ENCODE measurements at regions of chr15 and their contacts with region 1.

Region 1: GRCh38 chr15:43285609-43286037 is 18.9 kb upstream of the TGM5 start:
- DNase-seq: peak; percentile 83
- ATAC-seq: peak; percentile 85
- H3K4me3 ChIP-seq: peak overlapping the region in 1 of 5 experiments; percentile 16
- H3K4me3 Mint-ChIP-seq: no peak overlapping the region
- H3K27ac ChIP-seq: no peak overlapping the region
- H3K27ac Mint-ChIP-seq: no peak overlapping the region
- H3K4me1 ChIP-seq: peaks cover 11 to 12% of the 10 kb centered on the region in 2 donors
- H3K4me1 Mint-ChIP-seq: peaks cover 14% of the 10 kb centered on the region
- H3K27me3 ChIP-seq: peaks cover 0 to 10% (median 0%) of the 10 kb centered on the region in 4 experiments
- H3K27me3 Mint-ChIP-seq: peaks cover 6% of the 10 kb centered on the region
- CTCF ChIP-seq: peak; percentile 84

Region 2: DNA sequence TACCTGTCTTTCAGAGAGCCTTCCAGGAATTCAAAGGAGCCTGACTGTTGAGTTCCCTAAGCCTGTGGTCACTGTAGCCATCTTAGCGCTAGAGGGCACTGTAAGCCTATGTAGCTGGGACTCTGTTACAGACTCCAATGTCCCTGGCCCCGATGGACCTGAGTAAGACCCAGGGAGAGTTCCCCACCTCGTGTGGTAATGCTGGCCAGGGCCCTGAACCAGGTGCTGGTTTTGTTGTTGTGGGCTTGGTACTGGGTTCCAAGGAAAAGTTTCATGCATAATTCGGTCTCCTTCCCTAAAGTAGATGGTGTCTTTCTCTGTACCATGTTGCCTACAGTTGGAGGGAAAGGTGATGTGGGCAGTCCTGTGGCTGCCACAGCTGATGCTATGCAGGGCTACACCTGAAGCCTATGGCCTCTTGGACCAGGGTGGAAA is 581.1 kb before region 1 on chr15:
- CTCF ChIA-PET with region 1: interaction called, 3 read pairs
- POLR2A ChIA-PET with region 1: no interaction called
- intact Hi-C with region 1: loop called (anchors 10 kb)
- DNase-seq: peak; percentile 73
- ATAC-seq: peak; percentile 89
- H3K4me3 ChIP-seq: no peak overlapping the region
- H3K4me3 Mint-ChIP-seq: no peak overlapping the region
- H3K27ac ChIP-seq: no peak overlapping the region
- H3K27ac Mint-ChIP-seq: no peak overlapping the region
- H3K4me1 ChIP-seq: no peaks in the 10 kb centered on the region
- H3K4me1 Mint-ChIP-seq: no peaks in the 10 kb centered on the region
- H3K27me3 ChIP-seq: no peaks in the 10 kb centered on the region
- H3K27me3 Mint-ChIP-seq: no peaks in the 10 kb centered on the region
- CTCF ChIP-seq: peak; percentile 78

Region 3: GRCh38 chr15:43185157-43186017 is 100.2 kb before region 1 on chr15 and contains the start of gene CCNDBP1:
- CTCF ChIA-PET with region 1: interaction called, 8 read pairs
- POLR2A ChIA-PET with region 1: interaction called, 5 read pairs
- intact Hi-C with region 1: loop called (anchors 1 kb)
- DNase-seq: peak; percentile 92
- ATAC-seq: peak; percentile 93
- H3K4me3 ChIP-seq: peak within 1 kb of the TSS; percentile 43 to 94 (median 75)
- H3K4me3 Mint-ChIP-seq: peak within 1 kb of the TSS; percentile 99
- H3K27ac ChIP-seq: peak within 1 kb of the TSS; percentile 87 to 94
- H3K27ac Mint-ChIP-seq: peak within 1 kb of the TSS; percentile 98
- H3K4me1 ChIP-seq: peaks cover 21 to 32% of the 10 kb centered on the region in 2 donors
- H3K4me1 Mint-ChIP-seq: peaks cover 38% of the 10 kb centered on the region
- H3K27me3 ChIP-seq: no peaks in the 10 kb centered on the region
- H3K27me3 Mint-ChIP-seq: no peaks in the 10 kb centered on the region
- CTCF ChIP-seq: peak; percentile 67
- total RNA-seq, gene CCNDBP1: 113 and 116 TPM in 2 replicates

Region 4: DNA sequence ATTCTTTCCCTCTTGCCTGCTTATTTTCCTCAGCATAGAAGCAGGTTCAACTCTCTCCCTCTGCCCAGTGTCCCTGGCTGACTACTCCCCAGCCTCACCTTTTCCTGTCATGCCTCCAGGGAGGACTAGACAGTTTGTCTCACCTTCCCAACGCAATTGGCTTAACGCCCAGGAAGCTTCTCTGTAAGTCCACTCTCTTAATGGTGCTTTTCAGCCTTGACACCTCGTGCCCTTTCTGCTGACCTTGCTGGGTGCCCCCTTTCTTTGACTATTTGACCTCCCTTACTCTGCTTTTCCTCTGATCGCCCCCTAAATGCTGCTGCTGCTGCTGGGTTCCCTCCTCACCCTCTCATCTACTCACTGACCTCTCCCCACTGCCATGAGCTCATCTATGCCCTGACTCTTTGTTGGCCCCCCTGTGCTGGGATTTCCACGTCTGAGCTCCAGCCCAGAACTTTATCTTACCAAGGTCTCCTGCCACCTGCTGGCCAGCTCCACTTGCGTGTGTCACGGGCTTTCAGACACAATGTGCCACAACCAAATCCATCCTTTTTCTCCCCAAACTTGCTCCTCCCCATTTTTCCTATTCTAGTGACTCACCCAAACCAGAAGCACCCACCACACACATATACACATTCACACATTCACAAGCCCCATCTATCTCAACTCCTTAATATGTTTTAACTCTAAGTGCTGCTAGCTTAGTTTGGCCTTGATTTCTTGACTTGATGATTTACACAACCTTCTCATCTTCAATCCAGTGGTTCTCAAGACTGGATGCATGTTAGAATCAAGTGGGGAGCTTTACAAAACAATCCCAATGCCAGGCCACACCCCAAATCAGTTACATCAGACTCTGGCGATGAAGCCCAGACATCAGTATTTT is 81.4 kb before region 1 on chr15:
- CTCF ChIA-PET with region 1: interaction called, 10 read pairs
- POLR2A ChIA-PET with region 1: no interaction called
- intact Hi-C with region 1: no loop called
- DNase-seq: peak; percentile 55
- ATAC-seq: peak; percentile 64
- H3K4me3 ChIP-seq: no peak overlapping the region
- H3K4me3 Mint-ChIP-seq: no peak overlapping the region
- H3K27ac ChIP-seq: no peak overlapping the region
- H3K27ac Mint-ChIP-seq: no peak overlapping the region
- H3K4me1 ChIP-seq: no peaks in the 10 kb centered on the region
- H3K4me1 Mint-ChIP-seq: peaks cover 6% of the 10 kb centered on the region
- H3K27me3 ChIP-seq: peaks cover 0 to 4% (median 1%) of the 10 kb centered on the region in 4 experiments
- H3K27me3 Mint-ChIP-seq: peaks cover 16% of the 10 kb centered on the region
- CTCF ChIP-seq: peak; percentile 68

Region 5: DNA sequence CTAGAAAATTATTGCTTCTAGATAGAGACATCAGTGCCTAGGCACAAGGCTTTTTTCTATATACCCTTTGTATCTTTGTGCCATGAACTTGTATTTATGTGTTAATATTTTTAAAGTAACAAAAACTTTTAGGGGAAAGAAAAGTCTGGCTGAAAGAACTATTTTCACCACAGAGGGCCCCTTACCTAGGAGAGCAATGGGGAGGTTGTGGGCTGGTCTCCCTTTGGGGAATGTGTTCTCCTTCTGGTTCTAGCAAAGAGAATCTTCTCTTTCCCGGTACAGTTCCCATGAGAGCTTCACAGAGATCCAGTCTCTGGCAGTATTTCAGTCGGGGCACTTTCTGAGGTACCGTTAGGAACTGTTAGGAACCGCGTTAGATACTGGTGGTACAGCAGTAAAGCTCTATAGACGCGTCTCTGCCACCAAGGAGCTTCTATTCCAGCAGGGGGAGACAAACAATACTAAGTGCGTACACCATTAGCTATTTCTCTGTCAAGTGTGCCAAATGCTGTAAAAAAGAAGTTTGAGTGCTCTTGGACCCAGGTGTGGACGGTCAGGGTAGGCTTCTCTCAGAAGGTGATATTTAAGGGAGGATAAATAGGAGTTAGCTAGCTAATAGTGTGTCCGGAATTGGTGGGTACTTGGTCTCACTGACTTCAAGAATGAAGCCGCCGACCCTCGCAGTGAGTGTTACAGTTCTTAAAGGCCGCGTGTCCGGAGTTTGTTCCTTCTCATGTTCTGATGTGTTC is 60.2 kb before region 1 on chr15:
- CTCF ChIA-PET with region 1: interaction called, 549 read pairs
- POLR2A ChIA-PET with region 1: no interaction called
- intact Hi-C with region 1: no loop called
- DNase-seq: peak; percentile 82
- ATAC-seq: peak; percentile 76
- H3K4me3 ChIP-seq: no peak overlapping the region
- H3K4me3 Mint-ChIP-seq: no peak overlapping the region
- H3K27ac ChIP-seq: no peak overlapping the region
- H3K27ac Mint-ChIP-seq: no peak overlapping the region
- H3K4me1 ChIP-seq: peaks cover 0 to 7% of the 10 kb centered on the region in 2 donors
- H3K4me1 Mint-ChIP-seq: peaks cover 7% of the 10 kb centered on the region
- H3K27me3 ChIP-seq: no peaks in the 10 kb centered on the region
- H3K27me3 Mint-ChIP-seq: peaks cover 10% of the 10 kb centered on the region
- CTCF ChIP-seq: peak; percentile 80

Region 6: DNA sequence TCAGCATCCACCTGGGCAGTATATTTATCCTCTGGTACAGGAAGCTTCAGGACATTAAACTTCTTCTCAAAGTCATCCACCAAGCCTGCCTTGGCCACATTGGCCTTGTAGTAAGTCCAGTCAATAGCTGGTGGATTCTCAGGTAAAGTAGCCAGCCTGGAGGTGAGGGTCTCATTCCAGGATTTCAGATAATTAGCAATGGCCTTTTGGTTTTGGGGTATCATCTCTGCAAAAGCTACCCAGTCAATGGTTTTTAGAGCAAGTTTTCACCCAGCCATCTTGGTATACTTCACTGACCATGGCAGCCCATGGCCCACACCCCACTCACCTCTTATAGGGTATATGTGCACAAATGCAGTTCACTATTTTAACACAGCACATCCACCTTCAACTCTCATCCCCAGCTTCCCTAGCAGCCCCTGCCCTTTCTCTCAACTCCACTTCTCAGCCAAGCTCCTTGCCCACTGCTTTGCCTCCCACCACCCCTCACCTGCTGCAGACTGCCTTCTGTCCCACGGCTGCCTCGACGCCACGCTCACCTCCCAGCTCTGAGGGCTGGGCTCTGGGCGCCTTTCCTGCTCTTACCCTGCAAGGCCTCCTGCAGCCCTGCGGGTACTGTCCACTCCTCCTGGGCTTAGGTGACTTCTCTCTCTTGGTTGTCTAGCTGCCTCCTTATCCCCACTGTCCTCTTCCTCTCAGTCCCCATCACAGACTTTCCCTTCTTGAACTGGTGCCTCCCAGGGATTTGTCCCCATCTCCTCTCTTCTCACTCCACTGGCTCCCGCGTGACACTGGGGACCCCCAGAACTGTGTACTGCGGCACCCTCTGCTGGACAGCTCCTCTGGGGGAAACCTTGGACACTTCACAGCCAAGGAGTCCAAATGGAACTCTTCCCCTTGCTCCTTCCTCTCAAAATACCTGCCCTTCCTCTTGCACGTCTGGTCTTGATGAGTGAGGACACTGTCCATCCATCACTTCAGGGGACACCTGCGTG is 17.2 kb before region 1 on chr15:
- CTCF ChIA-PET with region 1: interaction called, 18 read pairs
- POLR2A ChIA-PET with region 1: no interaction called
- intact Hi-C with region 1: loop called (anchors 1 kb)
- DNase-seq: no peak
- ATAC-seq: no peak
- H3K4me3 ChIP-seq: no peak overlapping the region
- H3K4me3 Mint-ChIP-seq: no peak overlapping the region
- H3K27ac ChIP-seq: no peak overlapping the region
- H3K27ac Mint-ChIP-seq: peak overlapping the region; percentile 1
- H3K4me1 ChIP-seq: peaks cover 26 to 27% of the 10 kb centered on the region in 2 donors
- H3K4me1 Mint-ChIP-seq: peaks cover 39% of the 10 kb centered on the region
- H3K27me3 ChIP-seq: no peaks in the 10 kb centered on the region
- H3K27me3 Mint-ChIP-seq: peaks cover 8% of the 10 kb centered on the region
- CTCF ChIP-seq: no peak

Region 7: GRCh38 chr15:43302205-43302817 is 16.7 kb after region 1 on chr15:
- CTCF ChIA-PET with region 1: interaction called, 10 read pairs
- POLR2A ChIA-PET with region 1: no interaction called
- intact Hi-C with region 1: no loop called
- DNase-seq: no peak
- ATAC-seq: no peak
- H3K4me3 ChIP-seq: no peak within 1 kb of the TSS
- H3K4me3 Mint-ChIP-seq: no peak within 1 kb of the TSS
- H3K27ac ChIP-seq: no peak within 1 kb of the TSS
- H3K27ac Mint-ChIP-seq: no peak within 1 kb of the TSS
- H3K4me1 ChIP-seq: no peaks in the 10 kb centered on the region
- H3K4me1 Mint-ChIP-seq: no peaks in the 10 kb centered on the region
- H3K27me3 ChIP-seq: peaks cover 0 to 13% (median 4%) of the 10 kb centered on the region in 4 experiments
- H3K27me3 Mint-ChIP-seq: peaks cover 43% of the 10 kb centered on the region
- CTCF ChIP-seq: no peak

Measured in B cell (primary cell).